ENCODE measurements at regions of chr3 and their contacts with region 1.

Region 1: DNA sequence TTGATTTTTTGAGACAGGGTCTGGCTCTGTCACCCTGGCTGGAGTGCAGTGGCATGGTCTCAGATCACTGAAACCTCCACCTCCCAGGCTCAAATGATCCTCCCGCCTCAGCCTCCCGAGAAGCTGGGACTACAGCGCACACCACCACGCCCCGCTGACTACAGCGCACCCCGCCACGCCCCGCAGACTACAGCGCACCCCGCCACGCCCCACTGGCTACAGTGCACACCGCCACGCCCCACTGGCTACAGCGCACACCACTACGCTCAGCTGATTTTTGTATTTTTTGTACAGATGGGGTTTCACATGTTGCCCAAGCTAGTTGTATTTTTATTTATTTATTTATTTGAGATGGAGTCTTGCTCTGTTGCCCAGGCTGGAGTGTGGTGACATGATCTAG is 35.6 kb downstream of the SLC51A start:
- DNase-seq: no peak
- H3K4me3 Mint-ChIP-seq: no peak overlapping the region
- H3K27ac Mint-ChIP-seq: no peak overlapping the region
- H3K4me1 Mint-ChIP-seq: peaks cover 10% of the 10 kb centered on the region
- H3K27me3 Mint-ChIP-seq: no peaks in the 10 kb centered on the region

Region 2: DNA sequence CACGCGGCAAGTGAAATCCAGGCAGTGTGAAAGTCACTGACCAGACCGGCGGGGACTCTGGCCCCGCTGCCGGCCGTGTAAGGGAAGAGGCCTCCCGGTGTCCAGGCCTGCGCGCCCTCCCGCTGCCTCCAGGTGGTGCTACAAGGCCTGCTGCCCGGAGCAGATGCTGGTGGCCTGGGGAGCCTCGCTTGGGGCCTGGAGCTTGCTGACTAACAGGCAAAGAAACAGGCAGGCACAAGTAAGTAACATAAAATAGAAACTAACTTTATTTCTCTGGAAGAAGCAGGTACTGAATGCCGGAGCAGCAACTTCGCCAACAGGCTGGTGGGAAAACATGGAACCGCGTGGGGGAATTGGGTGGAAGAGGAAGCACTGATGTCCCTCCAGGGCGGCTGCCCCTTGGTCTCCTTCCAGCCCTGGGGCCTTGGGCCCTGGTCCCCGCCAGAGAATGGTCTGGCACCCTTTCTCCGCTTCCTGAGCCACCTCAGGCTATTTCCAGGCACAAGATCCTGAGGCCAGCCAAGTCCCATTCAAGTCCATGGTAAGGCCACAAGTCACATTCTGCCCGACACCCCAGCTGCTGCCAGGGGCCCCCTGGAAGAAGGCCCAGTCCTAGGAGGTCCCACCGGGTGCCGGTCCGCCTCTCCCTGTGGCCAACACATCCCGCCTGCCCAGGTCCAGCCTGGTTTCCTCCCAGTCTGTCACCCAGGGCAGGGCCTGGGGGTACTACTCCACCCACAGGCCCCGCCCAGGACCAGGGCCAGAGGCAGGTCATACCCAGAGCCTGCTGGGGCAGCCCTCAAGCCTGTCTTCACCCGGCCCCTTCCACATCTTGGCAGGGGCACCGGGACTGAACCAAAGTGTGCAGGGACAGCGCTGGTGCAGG is 388.6 kb before region 1 on chr3:
- intact Hi-C with region 1: no loop called
- DNase-seq: peak; percentile 47
- H3K4me3 Mint-ChIP-seq: no peak overlapping the region
- H3K27ac Mint-ChIP-seq: no peak overlapping the region
- H3K4me1 Mint-ChIP-seq: peaks cover 10% of the 10 kb centered on the region
- H3K27me3 Mint-ChIP-seq: no peaks in the 10 kb centered on the region

Region 3: DNA sequence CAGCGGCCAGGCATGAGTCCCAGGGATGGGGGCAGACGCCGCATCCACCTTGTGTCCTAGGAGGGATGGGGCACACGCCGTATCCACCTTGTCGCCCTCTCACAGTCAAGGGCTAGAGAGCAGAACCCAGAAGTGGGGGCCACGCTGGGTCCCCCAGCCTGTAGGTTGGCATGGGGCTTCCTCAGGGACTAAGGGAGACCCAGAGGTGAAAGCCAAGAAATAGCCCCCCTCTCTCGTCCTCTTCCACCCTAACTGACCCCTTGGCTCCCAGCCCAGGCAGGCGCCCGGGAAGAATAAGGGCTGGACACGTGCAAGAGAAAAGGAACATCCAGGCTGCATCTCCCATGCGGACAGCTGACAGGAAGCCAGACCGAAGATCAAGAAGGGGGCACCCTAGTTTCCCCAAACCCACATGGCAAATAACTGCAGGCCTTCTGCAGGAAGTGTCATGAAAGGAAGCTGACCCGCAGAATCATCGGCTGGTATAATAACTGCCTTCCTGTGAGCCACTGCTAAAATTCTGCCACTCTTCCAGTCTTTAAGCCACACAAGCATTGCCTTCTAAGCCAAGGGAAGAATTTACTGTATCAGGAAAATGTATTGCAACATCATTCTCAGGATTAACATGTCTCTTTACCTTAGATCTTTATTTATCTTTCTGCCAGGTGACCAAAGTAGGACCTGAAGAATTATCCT is 131.5 kb before region 1 on chr3:
- intact Hi-C with region 1: no loop called
- DNase-seq: no peak
- H3K4me3 Mint-ChIP-seq: peak overlapping the region; percentile 15
- H3K27ac Mint-ChIP-seq: peak overlapping the region; percentile 38
- H3K4me1 Mint-ChIP-seq: peaks cover 32% of the 10 kb centered on the region
- H3K27me3 Mint-ChIP-seq: no peaks in the 10 kb centered on the region

Region 4: GRCh38 chr3:196219194-196219978 is 32.5 kb before region 1 on chr3:
- intact Hi-C with region 1: loop called (anchors 1 kb)
- DNase-seq: peak; percentile 56
- H3K4me3 Mint-ChIP-seq: peak overlapping the region; percentile 76
- H3K27ac Mint-ChIP-seq: peak overlapping the region; percentile 81
- H3K4me1 Mint-ChIP-seq: peaks cover 22% of the 10 kb centered on the region
- H3K27me3 Mint-ChIP-seq: peaks cover 3% of the 10 kb centered on the region

Region 5: DNA sequence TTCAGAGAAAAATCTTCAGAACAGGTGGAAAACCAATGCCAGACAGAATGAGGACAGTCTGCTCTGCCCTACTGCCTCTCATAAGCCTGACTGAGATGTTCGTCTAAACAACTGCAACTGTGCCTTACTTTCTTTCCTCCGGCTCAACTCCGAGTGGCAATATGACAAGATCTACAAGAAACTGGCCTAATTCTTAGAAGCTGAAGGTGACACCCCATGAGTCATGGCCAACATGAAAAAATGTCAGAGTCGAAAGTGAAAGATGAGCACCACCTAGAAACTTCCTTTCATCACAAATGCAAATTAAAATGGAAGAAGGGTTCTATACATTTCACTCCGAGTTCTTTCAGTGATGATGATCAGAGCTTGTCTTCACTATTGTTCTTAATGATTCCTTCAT is 22.7 kb after region 1 on chr3:
- intact Hi-C with region 1: loop called (anchors 1 kb)
- DNase-seq: peak; percentile 78
- H3K4me3 Mint-ChIP-seq: peak overlapping the region; percentile 79
- H3K27ac Mint-ChIP-seq: peak overlapping the region; percentile 98
- H3K4me1 Mint-ChIP-seq: peaks cover 60% of the 10 kb centered on the region
- H3K27me3 Mint-ChIP-seq: no peaks in the 10 kb centered on the region

Region 6: GRCh38 chr3:196287440-196288148 is 35.7 kb after region 1 on chr3 and contains the start of gene PCYT1A:
- intact Hi-C with region 1: loop called (anchors 1 kb)
- DNase-seq: peak; percentile 72
- H3K4me3 Mint-ChIP-seq: peak within 1 kb of the TSS; percentile 99
- H3K27ac Mint-ChIP-seq: peak within 1 kb of the TSS; percentile 95
- H3K4me1 Mint-ChIP-seq: peaks cover 44% of the 10 kb centered on the region
- H3K27me3 Mint-ChIP-seq: no peaks in the 10 kb centered on the region
- total RNA-seq, gene PCYT1A: 54.7 and 57.0 TPM in 2 replicates

Region 7: DNA sequence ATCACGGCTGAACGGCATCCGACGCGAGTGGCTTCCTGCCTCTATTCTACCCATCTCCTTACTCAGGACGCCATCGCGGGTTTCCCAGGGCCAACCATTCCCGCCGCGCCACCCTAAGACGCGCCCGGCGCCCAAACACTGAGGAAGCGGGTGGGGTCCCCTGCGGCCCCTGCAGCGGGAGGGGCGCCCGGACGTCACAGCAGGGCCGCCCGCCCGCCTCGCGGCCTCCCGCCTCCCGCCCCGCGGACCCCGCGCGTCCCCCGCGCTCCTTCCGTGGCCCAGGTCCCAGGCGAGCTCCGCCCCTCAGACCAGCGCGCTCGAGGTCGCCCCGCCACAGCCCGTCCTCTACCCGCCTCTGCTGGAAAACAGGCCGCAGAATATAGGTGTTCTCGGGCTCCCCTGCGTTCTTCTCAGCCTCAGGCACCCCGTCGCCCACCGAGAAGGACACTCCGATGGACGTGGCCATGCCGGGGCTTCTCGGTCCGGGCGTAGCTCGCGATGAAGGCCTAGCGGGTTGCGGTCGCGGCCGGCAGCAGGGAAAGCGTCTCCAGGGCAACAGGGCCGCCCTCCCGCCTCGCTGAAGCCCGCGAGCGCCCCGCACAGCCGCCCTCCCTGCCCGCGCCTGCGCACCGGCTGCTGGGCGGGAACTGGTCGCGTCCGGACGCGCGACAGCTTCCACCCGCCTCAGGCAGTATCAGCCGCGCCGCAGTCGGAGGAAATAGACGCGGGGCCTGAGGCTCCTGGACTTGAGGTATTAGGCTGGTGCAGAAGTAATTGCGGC is 66.0 kb after region 1 on chr3 and contains the start of gene DYNLT2B:
- intact Hi-C with region 1: loop called (anchors 1 kb)
- DNase-seq: peak; percentile 87
- H3K4me3 Mint-ChIP-seq: peak within 1 kb of the TSS; percentile 95
- H3K27ac Mint-ChIP-seq: peak within 1 kb of the TSS; percentile 98
- H3K4me1 Mint-ChIP-seq: peaks cover 7% of the 10 kb centered on the region
- H3K27me3 Mint-ChIP-seq: no peaks in the 10 kb centered on the region
- total RNA-seq, gene DYNLT2B: 11.6 and 12.7 TPM in 2 replicates

Region 8: DNA sequence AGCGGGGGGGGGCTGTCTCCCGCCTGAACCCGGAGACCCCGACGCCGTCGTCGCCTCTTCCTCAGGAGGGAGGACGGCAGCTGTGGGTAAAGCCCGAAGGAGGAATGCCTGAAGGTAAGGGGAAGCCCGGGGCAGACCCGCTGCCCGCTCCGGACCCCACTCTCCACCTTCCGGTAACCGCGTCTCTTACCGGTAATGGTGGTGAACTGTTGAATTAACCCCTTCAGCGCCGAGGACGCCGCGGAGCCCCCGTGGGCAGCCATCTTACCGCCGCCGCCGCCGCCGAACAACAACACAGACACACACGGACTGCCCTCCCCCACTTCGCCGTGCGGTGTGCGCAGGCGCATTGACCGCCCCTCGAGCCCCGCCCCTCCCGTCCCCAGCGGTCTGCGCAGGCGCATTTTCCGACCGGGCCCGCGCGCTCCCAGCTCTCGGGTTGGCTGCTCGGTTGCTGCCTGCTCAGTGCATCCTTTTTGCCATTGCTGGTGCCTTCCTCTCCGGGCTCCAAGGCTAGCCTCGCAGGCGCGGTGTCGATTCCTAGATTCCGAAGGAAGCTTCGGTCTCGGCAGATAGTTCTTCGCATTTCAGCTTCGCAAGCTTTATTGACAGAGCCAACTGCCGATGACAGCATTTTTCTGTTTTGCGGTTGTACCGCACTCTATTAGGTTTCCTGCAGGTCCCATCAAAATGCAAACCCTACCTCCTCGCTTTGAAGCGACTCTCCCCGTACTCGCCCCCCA is 180.4 kb after region 1 on chr3 and contains the start of gene UBXN7:
- intact Hi-C with region 1: loop called (anchors 1 kb)
- DNase-seq: peak; percentile 91
- H3K4me3 Mint-ChIP-seq: peak within 1 kb of the TSS; percentile 86
- H3K27ac Mint-ChIP-seq: peak within 1 kb of the TSS; percentile 97
- H3K4me1 Mint-ChIP-seq: peaks cover 23% of the 10 kb centered on the region
- H3K27me3 Mint-ChIP-seq: peaks cover 10% of the 10 kb centered on the region
- total RNA-seq, gene UBXN7: 54.8 and 60.9 TPM in 2 replicates

Region 9: GRCh38 chr3:196518966-196519717 is 267.2 kb after region 1 on chr3:
- intact Hi-C with region 1: loop called (anchors 1 kb)
- DNase-seq: peak; percentile 40
- H3K4me3 Mint-ChIP-seq: no peak overlapping the region
- H3K27ac Mint-ChIP-seq: no peak overlapping the region
- H3K4me1 Mint-ChIP-seq: no peaks in the 10 kb centered on the region
- H3K27me3 Mint-ChIP-seq: peaks cover 3% of the 10 kb centered on the region